Activated T-helper 1 cell treated with anti-CD3 and anti-CD28 coated beads, Interleukin-12 subunit alpha, Interleukin-12 subunit beta, Interleukin-2, Interleukin-4 antibody, amounts not matched to agents 30 ng/mL and 10 ng/mL and 1 ng/mL, durations not matched to agents 14 hours and 24 hours and 36 hours (primary cell): ENCODE measurements at regions of chr9 and their contacts with region 1.

Region 1: DNA sequence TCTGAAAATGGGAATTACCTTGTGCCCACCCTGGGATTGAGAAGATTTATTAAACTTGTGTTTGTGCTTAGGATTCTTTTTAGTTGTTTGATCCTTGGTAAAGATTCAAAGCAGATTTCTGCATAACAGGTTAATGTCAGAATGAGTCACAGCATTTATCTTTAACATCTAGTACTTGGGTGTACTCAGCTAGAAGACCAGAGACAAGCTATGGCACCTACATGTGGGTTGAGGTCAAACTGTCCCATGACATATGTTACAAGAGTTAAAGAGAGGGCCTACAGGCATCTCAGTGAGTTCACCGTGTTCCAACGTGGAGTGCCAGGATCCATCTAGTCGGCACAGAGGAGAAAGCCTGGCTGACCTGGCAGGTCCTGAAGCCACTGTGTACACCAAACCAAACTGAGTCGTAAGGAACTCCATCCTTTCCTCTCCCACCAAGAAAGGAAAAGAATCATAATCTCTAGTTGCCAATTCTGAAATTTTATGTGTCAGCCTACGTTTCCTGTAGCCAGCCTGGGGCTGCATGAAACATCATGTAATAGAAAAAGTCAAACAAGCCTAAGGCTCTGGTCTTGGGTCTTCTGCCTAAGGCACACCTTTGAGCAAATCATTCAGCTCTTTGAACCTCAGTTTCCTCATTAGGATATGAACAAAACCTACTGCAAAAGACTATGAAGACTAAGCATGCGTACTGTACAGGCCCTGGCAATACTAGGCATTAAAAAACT is 73.7 kb downstream of the RCL1 start:
- DNase-seq: no peak
- H3K4me3 Mint-ChIP-seq: peak overlapping the region; percentile 45
- H3K27ac Mint-ChIP-seq: peak overlapping the region; percentile 90
- H3K4me1 Mint-ChIP-seq: peaks cover 36% of the 10 kb centered on the region
- H3K27me3 Mint-ChIP-seq: no peaks in the 10 kb centered on the region

Region 2: DNA sequence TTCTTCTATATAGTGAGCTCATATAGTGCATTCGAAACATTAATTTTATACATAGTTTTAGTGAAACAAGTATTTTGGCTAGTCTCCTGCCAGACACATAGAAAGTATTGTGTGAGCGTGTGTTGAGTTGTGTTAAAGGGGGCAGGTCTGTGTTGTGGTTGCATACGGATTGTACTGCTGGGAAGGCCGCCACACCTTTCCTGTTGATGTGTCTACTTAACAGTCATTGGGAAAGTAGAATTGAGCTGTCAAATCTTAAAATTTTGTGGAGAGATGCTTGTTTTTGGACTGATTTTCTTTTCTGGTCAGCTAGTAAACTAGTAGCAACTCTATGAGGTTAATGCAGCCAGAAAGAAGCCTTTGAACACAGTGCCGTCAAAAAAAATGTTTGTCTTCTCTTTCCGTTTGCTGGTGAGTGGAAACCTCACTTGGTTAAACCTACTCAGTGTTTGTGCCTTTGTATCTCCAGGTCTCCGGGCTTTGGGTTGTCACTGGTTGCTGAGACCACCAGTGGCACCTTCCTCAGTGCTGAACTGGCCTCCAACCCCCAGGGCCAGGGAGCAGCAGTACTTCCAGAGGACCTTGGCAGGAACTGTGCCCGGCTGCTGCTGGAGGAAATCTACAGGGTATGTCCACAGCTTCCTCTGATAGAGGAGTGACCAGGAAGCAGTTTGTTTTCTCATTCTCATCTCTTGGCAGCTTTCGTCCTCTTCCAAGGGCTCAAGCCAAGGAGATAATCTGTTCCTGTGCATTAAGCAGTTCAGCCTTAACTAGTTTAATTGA is 22.2 kb before region 1 on chr9:
- intact Hi-C with region 1: loop called (anchors 2 kb)
- DNase-seq: no peak
- H3K4me3 Mint-ChIP-seq: peak overlapping the region; percentile 60
- H3K27ac Mint-ChIP-seq: peak overlapping the region; percentile 50
- H3K4me1 Mint-ChIP-seq: peaks cover 53% of the 10 kb centered on the region
- H3K27me3 Mint-ChIP-seq: no peaks in the 10 kb centered on the region

Region 3: DNA sequence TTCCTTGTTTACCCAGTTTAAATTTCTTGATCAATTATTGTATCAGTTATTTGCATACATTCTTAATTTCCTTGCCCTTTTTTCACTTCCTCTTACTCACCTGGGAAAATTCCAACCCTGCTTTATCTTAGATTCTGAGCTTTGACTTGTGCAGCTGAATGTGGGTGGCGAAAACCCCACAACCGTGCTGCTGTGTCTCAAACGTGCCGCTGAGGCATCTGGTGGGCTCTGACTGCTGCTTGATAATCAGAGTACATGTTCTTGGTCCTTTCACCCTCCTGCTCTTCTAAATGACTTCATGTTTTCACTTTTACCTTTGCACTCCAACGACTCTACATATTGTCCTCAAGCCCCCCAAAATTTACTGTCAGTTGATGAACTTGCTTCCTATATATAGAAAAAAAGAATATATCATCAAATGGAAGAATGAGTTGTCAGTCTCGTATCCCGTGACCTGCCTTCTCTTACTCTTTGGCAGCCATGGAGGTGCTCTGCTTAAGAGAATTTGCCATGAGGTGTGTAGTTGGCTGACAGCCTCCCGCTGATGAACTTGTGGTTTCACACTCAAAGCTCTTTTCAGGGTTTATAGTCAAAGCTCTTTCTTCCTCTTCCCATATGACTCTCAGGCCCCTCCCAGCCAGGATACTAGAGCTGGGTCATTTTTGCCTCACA is 104.7 kb after region 1 on chr9:
- intact Hi-C with region 1: loop called (anchors 1 kb)
- DNase-seq: peak; percentile 62
- H3K4me3 Mint-ChIP-seq: no peak overlapping the region
- H3K27ac Mint-ChIP-seq: no peak overlapping the region
- H3K4me1 Mint-ChIP-seq: peaks cover 14% of the 10 kb centered on the region
- H3K27me3 Mint-ChIP-seq: no peaks in the 10 kb centered on the region